ENCODE measurements at regions of chr5 and their contacts with region 1.

Region 1: GRCh38 chr5:38193015-38193581 is 65.3 kb upstream of the EGFLAM start:
- DNase-seq: peak; percentile 21
- ATAC-seq: peak; percentile 47
- H3K4me3 Mint-ChIP-seq: no peak overlapping the region
- H3K27ac Mint-ChIP-seq: no peak overlapping the region
- H3K4me1 Mint-ChIP-seq: no peaks in the 10 kb centered on the region
- H3K27me3 Mint-ChIP-seq: peaks cover 23% of the 10 kb centered on the region
- CTCF ChIP-seq: peak; percentile 50

Region 2: DNA sequence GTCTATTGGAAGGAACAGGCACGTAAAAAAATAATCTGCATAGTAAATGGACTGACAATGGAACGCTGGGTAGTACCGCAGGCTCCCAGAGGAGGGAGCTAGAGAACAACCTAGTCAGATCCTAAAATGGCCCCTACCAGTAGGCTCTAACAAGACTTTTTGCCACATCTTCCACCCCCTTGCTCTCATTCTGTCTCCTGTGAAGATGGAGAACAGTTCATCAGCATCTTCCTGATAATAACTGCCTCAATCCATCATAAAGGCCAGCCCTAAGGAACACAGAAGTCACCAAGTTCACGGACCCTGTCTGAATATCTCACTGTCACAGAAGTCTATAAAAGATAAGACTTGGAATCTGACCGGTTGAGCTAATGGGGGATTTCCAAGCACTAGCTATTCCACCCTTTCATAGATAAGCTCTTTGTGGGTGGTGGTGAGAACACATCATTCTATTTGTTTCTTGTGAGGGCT is 1453.3 kb before region 1 on chr5:
- CTCF ChIA-PET with region 1: no interaction called
- POLR2A ChIA-PET with region 1: no interaction called
- intact Hi-C with region 1: loop called (anchors 5 kb)
- DNase-seq: peak; percentile 47
- ATAC-seq: peak; percentile 75
- H3K4me3 Mint-ChIP-seq: no peak overlapping the region
- H3K27ac Mint-ChIP-seq: no peak overlapping the region
- H3K4me1 Mint-ChIP-seq: peaks cover 11% of the 10 kb centered on the region
- H3K27me3 Mint-ChIP-seq: peaks cover 25% of the 10 kb centered on the region
- CTCF ChIP-seq: no peak

Region 3: DNA sequence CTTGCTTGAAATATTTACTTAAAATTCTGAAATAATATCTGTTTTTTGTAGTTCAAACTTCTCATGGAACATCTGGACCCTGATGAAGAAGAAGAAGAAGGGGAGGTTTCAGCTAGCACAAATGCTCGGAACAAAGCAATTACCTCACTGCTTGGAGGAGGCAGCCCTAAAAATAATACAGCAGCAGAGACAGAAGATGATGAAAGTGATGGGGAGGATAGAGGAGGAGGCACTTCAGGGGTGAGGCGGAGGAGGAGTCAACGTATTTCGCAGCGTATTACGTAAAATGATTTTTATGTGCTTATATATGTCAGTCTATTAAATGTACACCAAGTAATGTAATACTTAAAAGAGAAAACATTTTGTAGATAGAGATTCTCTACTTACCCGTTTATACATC is 1129.4 kb before region 1 on chr5:
- CTCF ChIA-PET with region 1: no interaction called
- POLR2A ChIA-PET with region 1: no interaction called
- intact Hi-C with region 1: loop called (anchors 10 kb)
- DNase-seq: no peak
- ATAC-seq: no peak
- H3K4me3 Mint-ChIP-seq: no peak overlapping the region
- H3K27ac Mint-ChIP-seq: no peak overlapping the region
- H3K4me1 Mint-ChIP-seq: no peaks in the 10 kb centered on the region
- H3K27me3 Mint-ChIP-seq: no peaks in the 10 kb centered on the region
- CTCF ChIP-seq: no peak

Region 4: DNA sequence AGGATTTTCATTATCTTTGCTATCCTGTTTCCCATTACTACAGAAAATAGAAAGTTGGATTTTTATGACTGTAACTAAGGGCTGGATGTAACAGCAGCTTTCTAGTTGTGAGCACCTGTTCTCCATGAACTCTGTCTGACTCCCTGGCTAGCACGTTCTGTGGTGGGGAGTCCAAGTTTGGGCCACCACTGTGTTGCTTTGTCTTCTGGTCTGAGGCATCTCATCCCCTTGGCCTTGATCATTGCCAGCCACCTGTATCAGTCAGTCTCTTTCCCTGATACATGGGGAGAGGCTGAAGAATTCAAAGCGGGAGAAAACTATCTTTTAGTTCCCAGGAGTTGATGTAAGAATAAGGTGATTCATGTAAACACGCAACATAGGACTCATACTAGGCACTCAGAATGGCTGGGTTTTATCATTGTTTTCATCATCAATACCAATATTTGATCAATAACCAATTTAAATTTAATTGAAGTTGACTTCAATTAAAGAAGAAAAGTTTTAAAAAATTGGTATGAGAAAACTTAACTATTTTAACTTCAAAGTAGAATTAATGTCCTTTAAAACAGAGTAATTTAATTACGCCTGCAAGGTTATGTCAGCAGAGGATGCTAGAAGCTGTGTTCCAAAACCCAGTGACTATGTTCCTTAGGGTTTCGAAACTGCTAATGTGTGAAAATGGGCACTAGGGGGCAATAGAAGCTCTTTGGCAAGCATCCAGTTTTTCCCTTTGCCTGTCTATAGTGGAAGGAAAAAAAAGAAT is 780.4 kb before region 1 on chr5:
- CTCF ChIA-PET with region 1: interaction called, 18 read pairs
- POLR2A ChIA-PET with region 1: no interaction called
- intact Hi-C with region 1: loop called (anchors 1 kb)
- DNase-seq: no peak
- ATAC-seq: peak; percentile 50
- H3K4me3 Mint-ChIP-seq: no peak overlapping the region
- H3K27ac Mint-ChIP-seq: no peak overlapping the region
- H3K4me1 Mint-ChIP-seq: no peaks in the 10 kb centered on the region
- H3K27me3 Mint-ChIP-seq: no peaks in the 10 kb centered on the region
- CTCF ChIP-seq: no peak

Region 5: GRCh38 chr5:38104497-38105230 is 88.4 kb before region 1 on chr5:
- CTCF ChIA-PET with region 1: no interaction called
- POLR2A ChIA-PET with region 1: no interaction called
- intact Hi-C with region 1: no loop called
- DNase-seq: no peak
- ATAC-seq: no peak
- H3K4me3 Mint-ChIP-seq: no peak overlapping the region
- H3K27ac Mint-ChIP-seq: no peak overlapping the region
- H3K4me1 Mint-ChIP-seq: no peaks in the 10 kb centered on the region
- H3K27me3 Mint-ChIP-seq: peaks cover 3% of the 10 kb centered on the region
- CTCF ChIP-seq: no peak

Measured in activated B cell treated with CpG ODN at 0.5 μM for 24 hours (primary cell).